OCI-LY7 (cell line): ENCODE measurements at regions of chr11 and their contacts with region 1.

Region 1: GRCh38 chr11:2532704-2533586 is 88.1 kb downstream of the KCNQ1 start:
- DNase-seq: peak; percentile 92
- H3K4me3 ChIP-seq: no peak overlapping the region
- H3K27ac ChIP-seq: no peak overlapping the region
- H3K4me1 ChIP-seq: no peaks in the 10 kb centered on the region
- CTCF ChIP-seq: peak; percentile 99

Region 2: DNA sequence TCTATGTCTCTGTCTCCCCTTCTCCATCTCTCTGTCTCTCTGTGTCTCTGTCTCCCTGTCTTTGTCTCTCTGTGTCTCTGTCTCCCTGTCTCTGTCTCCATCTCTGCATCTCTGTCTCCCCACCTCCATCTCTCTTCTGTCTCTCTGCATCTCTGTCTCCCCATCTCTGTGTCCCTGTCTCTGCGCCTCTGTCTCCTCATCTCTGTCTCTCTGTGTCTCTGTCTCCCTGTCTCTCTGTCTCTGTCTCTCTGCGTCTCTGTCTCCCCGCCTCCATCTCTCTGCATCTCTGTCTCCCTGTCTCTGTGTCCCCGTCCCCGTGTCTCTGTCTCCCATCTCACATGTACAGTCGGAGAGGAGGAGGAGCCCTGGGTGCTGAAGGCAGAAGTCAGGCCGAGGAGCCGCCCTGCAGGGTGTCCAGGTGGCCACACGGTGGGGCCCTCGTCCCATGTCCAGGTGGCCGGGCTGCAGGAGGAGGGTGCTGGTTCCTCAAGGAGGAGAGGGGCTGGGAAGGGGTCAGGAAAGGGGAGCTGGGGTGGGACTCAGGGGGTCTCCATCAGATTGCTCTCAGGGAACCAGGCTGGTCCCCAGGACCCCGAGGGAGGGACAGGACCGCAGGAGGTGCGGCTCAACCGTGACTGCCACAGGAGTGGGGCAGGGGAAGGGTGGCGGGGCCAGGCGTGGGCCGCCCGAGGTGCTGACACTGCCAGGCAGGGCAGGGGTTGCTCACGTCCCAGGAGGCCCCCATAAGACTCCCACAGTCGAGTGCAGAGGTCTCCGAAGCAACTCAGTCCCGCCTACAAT is 335.8 kb before region 1 on chr11:
- CTCF ChIA-PET with region 1: no interaction called
- POLR2A ChIA-PET with region 1: no interaction called
- intact Hi-C with region 1: loop called (anchors 2 kb)
- DNase-seq: peak; percentile 63
- H3K4me3 ChIP-seq: no peak overlapping the region
- H3K27ac ChIP-seq: no peak overlapping the region
- H3K4me1 ChIP-seq: no peaks in the 10 kb centered on the region
- CTCF ChIP-seq: peak; percentile 82

Region 3: GRCh38 chr11:2305140-2305840 is 227.7 kb before region 1 on chr11:
- CTCF ChIA-PET with region 1: interaction called, 3 read pairs
- POLR2A ChIA-PET with region 1: no interaction called
- intact Hi-C with region 1: loop called (anchors 5 kb)
- DNase-seq: peak; percentile 84
- H3K4me3 ChIP-seq: no peak overlapping the region
- H3K27ac ChIP-seq: no peak overlapping the region
- H3K4me1 ChIP-seq: peaks cover 8% of the 10 kb centered on the region
- CTCF ChIP-seq: peak; percentile 93

Region 4: DNA sequence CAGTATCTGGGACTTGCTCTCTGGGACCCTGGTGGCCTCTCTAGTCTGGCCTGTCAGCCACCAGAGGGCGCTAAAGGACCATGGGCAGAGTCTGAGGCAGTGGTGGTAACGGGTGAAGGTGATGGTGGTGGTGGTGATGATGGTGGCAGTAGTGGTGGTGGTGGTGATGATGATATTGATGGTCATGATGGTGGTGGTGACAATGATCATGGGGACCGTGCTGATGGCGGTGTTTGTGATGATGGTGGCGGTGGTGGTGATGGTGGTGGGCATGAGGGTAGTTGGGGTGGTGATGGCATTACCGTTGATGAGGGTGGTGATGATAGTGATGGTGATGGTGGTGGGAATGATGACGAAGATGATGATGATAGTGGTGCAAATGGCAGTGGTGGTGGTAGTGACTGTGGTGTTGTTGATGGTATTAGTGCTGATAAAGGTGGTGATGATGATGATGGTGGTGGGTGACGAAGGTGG is 104.6 kb before region 1 on chr11:
- CTCF ChIA-PET with region 1: interaction called, 3 read pairs
- POLR2A ChIA-PET with region 1: no interaction called
- intact Hi-C with region 1: loop called (anchors 1 kb)
- DNase-seq: peak; percentile 73
- H3K4me3 ChIP-seq: no peak overlapping the region
- H3K27ac ChIP-seq: no peak overlapping the region
- H3K4me1 ChIP-seq: no peaks in the 10 kb centered on the region
- CTCF ChIP-seq: peak; percentile 94

Region 5: GRCh38 chr11:2699531-2700414 is 166.8 kb after region 1 on chr11 and contains the start of gene KCNQ1OT1:
- CTCF ChIA-PET with region 1: no interaction called
- POLR2A ChIA-PET with region 1: no interaction called
- intact Hi-C with region 1: no loop called
- DNase-seq: peak; percentile 91
- H3K4me3 ChIP-seq: peak within 1 kb of the TSS; percentile 71
- H3K27ac ChIP-seq: peak within 1 kb of the TSS; percentile 63
- H3K4me1 ChIP-seq: peaks cover 44% of the 10 kb centered on the region
- CTCF ChIP-seq: 0 out of 2 replicates have a peak, but pooled peaks have one; percentile 14
- total RNA-seq, gene KCNQ1OT1: 2.5 and 2.9 TPM in 2 replicates

Region 6: DNA sequence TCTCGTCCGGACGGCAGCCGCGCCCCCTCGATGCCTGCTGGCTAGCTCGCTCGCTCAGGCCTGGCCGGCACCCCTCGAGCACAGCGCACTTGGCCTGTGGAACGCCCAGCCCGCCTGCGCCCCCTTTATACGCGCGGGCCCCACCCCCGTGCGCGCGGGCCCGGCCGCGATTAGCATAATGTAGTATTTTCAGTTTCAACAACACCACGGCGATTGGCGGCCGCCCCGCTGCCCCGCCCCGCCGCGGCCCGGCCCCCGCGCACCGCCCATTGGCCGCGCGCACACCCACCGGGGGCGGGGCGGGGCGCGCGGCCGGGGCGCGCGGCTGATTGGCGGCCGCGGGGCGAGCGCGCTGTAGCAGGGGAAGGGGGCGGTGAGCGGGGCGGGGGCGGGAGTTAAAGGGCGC is 352.7 kb after region 1 on chr11 and contains the start of gene CDKN1C:
- CTCF ChIA-PET with region 1: interaction called, 5 read pairs
- POLR2A ChIA-PET with region 1: interaction called, 5 read pairs
- intact Hi-C with region 1: loop called (anchors 1 kb)
- DNase-seq: peak; percentile 82
- H3K4me3 ChIP-seq: peak within 1 kb of the TSS; percentile 65
- H3K27ac ChIP-seq: no peak within 1 kb of the TSS
- H3K4me1 ChIP-seq: peaks cover 13% of the 10 kb centered on the region
- CTCF ChIP-seq: no peak
- total RNA-seq, gene CDKN1C: 0.13 TPM in 1 of 2 replicates, not detected in the other

Region 7: GRCh38 chr11:2892215-2893020 is 359.5 kb after region 1 on chr11:
- CTCF ChIA-PET with region 1: interaction called, 5 read pairs
- POLR2A ChIA-PET with region 1: interaction called, 5 read pairs
- intact Hi-C with region 1: loop called (anchors 1 kb)
- DNase-seq: peak; percentile 71
- H3K4me3 ChIP-seq: peak overlapping the region; percentile 41
- H3K27ac ChIP-seq: peak overlapping the region; percentile 20
- H3K4me1 ChIP-seq: peaks cover 22% of the 10 kb centered on the region
- CTCF ChIP-seq: peak; percentile 87

Region 8: DNA sequence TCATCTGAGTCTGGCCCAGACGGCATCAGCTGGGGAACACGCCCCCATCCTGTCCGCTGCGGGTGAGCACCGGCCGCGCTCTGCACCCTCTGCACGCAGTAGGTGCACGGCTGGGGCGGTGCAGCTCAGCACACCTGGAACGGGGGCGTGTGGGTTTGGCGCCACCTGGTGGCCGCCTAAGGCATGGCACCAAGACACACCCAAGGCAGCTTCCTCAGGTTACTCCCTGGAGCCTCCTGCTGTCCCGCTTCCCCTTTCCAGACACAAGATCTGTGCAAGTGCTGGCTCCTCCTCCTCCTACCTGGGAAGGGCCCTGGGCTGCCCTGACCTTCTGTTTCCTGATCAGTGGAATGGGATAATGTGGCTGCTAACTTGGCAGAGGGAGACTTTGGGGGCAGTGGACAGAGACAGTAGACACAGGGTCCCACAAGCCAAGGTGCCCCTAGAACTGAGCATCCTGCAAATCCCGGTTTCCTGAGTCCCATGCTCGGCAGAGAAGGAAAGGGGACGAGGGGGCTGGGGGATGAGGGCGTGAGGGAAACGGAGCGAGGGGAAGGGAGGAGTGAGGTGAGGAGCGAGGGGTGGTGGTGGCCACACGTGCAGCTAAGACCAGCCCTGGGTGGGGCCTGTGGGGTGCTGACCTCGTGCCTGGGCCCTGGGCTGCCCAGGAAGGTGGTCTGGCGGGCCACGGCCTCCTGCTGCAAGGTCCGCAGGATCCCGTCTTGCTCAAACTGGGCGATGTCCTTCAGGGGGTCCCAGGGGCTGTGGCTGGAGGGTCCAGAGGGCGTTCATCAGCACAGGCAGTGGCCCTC is 559.1 kb after region 1 on chr11:
- CTCF ChIA-PET with region 1: no interaction called
- POLR2A ChIA-PET with region 1: no interaction called
- intact Hi-C with region 1: loop called (anchors 5 kb)
- DNase-seq: peak; percentile 61
- H3K4me3 ChIP-seq: no peak overlapping the region
- H3K27ac ChIP-seq: no peak overlapping the region
- H3K4me1 ChIP-seq: no peaks in the 10 kb centered on the region
- CTCF ChIP-seq: peak; percentile 89